ENCODE measurements at regions of chr22 and their contacts with region 1.

Region 1: GRCh38 chr22:19891317-19892256 is 36.9 kb upstream of the GNB1L start:
- DNase-seq: peak; percentile 92
- CTCF ChIP-seq: no peak

Region 2: DNA sequence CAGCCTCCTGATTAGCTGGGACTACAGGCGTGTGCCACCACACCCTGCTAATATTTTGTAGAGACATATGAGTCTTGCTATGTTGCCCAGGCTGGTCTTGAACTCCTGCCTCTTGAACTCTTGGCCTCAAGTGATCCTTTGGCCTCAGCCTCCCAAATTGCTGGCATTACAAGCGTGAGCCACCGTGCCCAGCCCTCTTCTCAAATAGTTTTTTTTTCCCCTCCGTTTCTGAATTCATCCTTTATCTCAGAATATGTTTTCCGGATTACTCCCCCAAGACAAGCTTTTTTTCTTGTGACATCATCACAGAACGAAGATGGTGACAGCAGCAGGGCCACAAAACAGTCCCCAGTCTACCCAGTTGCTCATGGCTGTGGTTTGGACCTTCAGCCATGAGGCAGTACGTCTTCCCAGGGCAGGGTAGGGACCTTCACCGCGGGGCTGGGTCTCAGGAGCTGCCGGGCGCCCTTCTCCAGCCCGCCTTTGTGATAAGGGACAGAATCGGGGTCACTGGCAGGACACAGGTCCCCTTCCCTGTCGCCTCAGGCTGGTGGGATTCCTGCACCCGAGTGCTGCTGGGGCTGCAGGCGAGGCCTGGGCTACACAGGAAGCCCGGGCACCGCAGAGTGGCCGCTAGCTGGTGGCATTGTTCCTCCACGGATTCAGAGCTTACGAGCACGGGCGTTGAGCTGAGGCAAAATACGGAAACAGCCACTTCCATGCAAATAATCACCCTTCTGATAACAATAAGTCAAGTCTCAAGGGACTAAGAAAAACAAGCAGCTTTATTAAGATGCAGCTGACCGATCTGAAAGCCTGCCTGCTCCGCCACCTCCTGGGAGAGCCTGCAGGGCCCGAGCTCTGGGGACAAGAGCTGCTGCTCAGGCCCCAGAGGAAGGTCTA is 118.9 kb before region 1 on chr22:
- in situ Hi-C with region 1: loop called (anchors 10 kb)
- DNase-seq: no peak
- CTCF ChIP-seq: peak; percentile 35

Region 3: GRCh38 chr22:19800761-19801244 is 90.8 kb before region 1 on chr22:
- in situ Hi-C with region 1: loop called (anchors 10 kb)
- DNase-seq: no peak
- CTCF ChIP-seq: no peak

Region 4: GRCh38 chr22:19970479-19971275 is 79.1 kb after region 1 on chr22:
- in situ Hi-C with region 1: no loop called
- DNase-seq: peak; percentile 92
- CTCF ChIP-seq: peak; percentile 98